ENCODE measurements at regions of chr4 and their contacts with region 1.

Region 1: GRCh38 chr4:168183717-168184608 is 91.6 kb downstream of the ANXA10 start:
- DNase-seq: peak; percentile 65
- H3K4me3 ChIP-seq: no peak overlapping the region
- H3K27ac ChIP-seq: no peak overlapping the region
- H3K4me1 ChIP-seq: peaks cover 3% of the 10 kb centered on the region
- H3K27me3 ChIP-seq: no peaks in the 10 kb centered on the region
- CTCF ChIP-seq: peak; percentile 18 to 22
- POLR2A ChIP-seq: no peak

Region 2: GRCh38 chr4:168153596-168154440 is 30.1 kb before region 1 on chr4:
- CTCF ChIA-PET with region 1: no interaction called
- POLR2A ChIA-PET with region 1: no interaction called
- dilution Hi-C with region 1: no loop called
- intact Hi-C with region 1: no loop called
- DNase-seq: peak; percentile 79
- H3K4me3 ChIP-seq: peak overlapping the region in 2 of 3 experiments; percentile 18 to 51
- H3K27ac ChIP-seq: no peak overlapping the region
- H3K4me1 ChIP-seq: peaks cover 4% of the 10 kb centered on the region
- H3K27me3 ChIP-seq: no peaks in the 10 kb centered on the region
- CTCF ChIP-seq: peak; percentile 57 to 73
- POLR2A ChIP-seq: peak; percentile 29

Region 3: GRCh38 chr4:168480931-168481611 is 297.1 kb after region 1 on chr4:
- CTCF ChIA-PET with region 1: interaction called, 4 read pairs
- POLR2A ChIA-PET with region 1: no interaction called
- dilution Hi-C with region 1: no loop called
- intact Hi-C with region 1: loop called (anchors 10 kb)
- DNase-seq: peak; percentile 88
- H3K4me3 ChIP-seq: peak overlapping the region; percentile 64 to 99 (median 90)
- H3K27ac ChIP-seq: peak overlapping the region; percentile 97
- H3K4me1 ChIP-seq: peaks cover 29% of the 10 kb centered on the region
- H3K27me3 ChIP-seq: no peaks in the 10 kb centered on the region
- CTCF ChIP-seq: no peak
- POLR2A ChIP-seq: no peak

Region 4: DNA sequence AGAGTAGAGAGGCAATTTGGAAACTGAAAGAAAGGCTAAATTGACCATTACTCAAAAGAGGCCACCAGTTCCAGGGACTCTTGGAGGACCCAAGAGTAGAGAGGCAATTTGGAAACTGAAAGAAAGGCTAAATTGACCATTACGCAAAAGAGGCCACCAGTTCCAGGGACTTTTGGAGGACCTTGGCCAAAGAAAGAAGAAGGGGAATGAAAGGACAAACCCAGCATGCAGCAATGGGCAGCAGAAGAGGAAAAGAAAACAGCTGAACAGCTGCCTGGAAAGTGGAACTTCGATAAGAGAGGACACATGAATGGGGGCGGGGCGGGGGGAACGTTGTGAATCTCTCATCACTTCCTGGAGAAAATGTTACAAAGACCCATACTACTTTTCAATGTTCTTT is 393.7 kb after region 1 on chr4:
- CTCF ChIA-PET with region 1: no interaction called
- POLR2A ChIA-PET with region 1: no interaction called
- dilution Hi-C with region 1: no loop called
- intact Hi-C with region 1: no loop called
- DNase-seq: no peak
- H3K4me3 ChIP-seq: no peak overlapping the region
- H3K27ac ChIP-seq: no peak overlapping the region
- H3K4me1 ChIP-seq: no peaks in the 10 kb centered on the region
- H3K27me3 ChIP-seq: no peaks in the 10 kb centered on the region
- CTCF ChIP-seq: no peak
- POLR2A ChIP-seq: no peak

Region 5: DNA sequence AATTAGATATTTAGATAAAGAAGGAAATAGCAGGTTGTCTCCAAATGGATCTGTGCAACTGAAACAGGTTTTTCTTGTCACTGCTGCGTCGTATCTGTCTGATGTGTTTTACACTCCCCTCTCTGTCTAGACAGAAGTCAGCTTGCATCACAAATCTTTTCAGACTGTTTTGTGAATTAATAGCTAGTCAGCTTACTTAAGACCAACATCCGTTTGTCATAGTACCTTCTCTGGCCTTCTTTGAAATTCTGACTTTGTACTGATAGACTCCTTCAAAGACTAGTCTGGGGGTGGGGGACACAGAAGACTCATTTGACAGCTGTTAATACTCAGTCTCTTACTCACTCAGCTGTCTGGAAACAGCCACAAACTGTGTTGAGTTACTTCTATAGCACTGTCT is 510.7 kb after region 1 on chr4:
- CTCF ChIA-PET with region 1: no interaction called
- POLR2A ChIA-PET with region 1: no interaction called
- dilution Hi-C with region 1: no loop called
- intact Hi-C with region 1: loop called (anchors 5 kb)
- DNase-seq: peak; percentile 36
- H3K4me3 ChIP-seq: no peak overlapping the region
- H3K27ac ChIP-seq: no peak overlapping the region
- H3K4me1 ChIP-seq: peaks cover 25% of the 10 kb centered on the region
- H3K27me3 ChIP-seq: no peaks in the 10 kb centered on the region
- CTCF ChIP-seq: no peak
- POLR2A ChIP-seq: no peak

Region 6: DNA sequence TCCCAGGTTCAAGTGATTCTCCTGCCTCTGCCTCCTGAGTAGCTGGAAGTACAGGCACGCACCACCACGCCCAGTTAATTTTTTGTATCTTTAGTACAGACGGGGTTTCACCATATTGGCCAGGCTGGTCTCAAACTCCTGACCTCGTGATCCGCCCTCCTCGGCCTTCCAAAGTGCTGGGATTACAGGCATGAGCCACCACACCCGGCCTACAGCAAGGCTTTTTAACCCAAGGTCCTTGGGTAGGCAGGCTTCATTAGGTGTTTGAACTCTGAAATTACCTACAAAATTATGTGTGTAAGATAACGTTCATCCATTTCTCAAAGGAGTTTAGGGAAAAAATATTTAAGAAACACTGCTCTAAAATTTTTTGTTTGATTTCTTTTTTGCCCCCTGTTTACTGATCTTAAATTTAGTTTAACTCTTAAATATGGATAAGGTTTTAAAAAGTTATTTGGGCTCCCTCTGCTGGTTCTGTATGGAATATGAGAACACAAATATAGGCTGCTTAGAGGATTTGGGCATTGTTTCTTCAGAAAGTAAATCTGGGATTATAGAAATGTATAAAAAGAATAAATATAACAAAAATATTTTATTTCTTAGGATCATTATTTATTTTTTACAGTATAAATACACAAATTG is 733.3 kb after region 1 on chr4:
- CTCF ChIA-PET with region 1: interaction called, 15 read pairs
- POLR2A ChIA-PET with region 1: no interaction called
- dilution Hi-C with region 1: no loop called
- intact Hi-C with region 1: loop called (anchors 1 kb)
- DNase-seq: peak; percentile 65
- H3K4me3 ChIP-seq: no peak overlapping the region
- H3K27ac ChIP-seq: no peak overlapping the region
- H3K4me1 ChIP-seq: no peaks in the 10 kb centered on the region
- H3K27me3 ChIP-seq: no peaks in the 10 kb centered on the region
- CTCF ChIP-seq: peak in 1 of 2 donors; percentile 25
- POLR2A ChIP-seq: no peak

Region 7: GRCh38 chr4:169485791-169486742 is 1302.1 kb after region 1 on chr4:
- CTCF ChIA-PET with region 1: no interaction called
- POLR2A ChIA-PET with region 1: no interaction called
- dilution Hi-C with region 1: no loop called
- intact Hi-C with region 1: loop called (anchors 5 kb)
- DNase-seq: peak; percentile 78
- H3K4me3 ChIP-seq: no peak overlapping the region
- H3K27ac ChIP-seq: no peak overlapping the region
- H3K4me1 ChIP-seq: peaks cover 3% of the 10 kb centered on the region
- H3K27me3 ChIP-seq: no peaks in the 10 kb centered on the region
- CTCF ChIP-seq: peak; percentile 39 to 52
- POLR2A ChIP-seq: no peak

Measured in endothelial cell of umbilical vein (primary cell).